ENCODE measurements at regions of chr22 and their contacts with region 1.

Region 1: GRCh38 chr22:46737976-46738646 is at the start of gene CERK:
- DNase-seq: peak; percentile 60 to 79 (median 64)
- H3K4me3 ChIP-seq: peak within 1 kb of the TSS; percentile 55 to 64
- H3K4me3 Mint-ChIP-seq: peak within 1 kb of the TSS; percentile 97 to 100 (median 100)
- H3K27ac ChIP-seq: peak within 1 kb of the TSS; percentile 67
- H3K27ac Mint-ChIP-seq: peak within 1 kb of the TSS; percentile 98 to 100 (median 100)
- H3K4me1 ChIP-seq: peaks cover 47% of the 10 kb centered on the region
- H3K4me1 Mint-ChIP-seq: peaks cover 24 to 56% (median 37%) of the 10 kb centered on the region in 4 donors
- H3K27me3 ChIP-seq: no peaks in the 10 kb centered on the region
- H3K27me3 Mint-ChIP-seq: no peaks in the 10 kb centered on the region
- total RNA-seq, gene CERK: 161 to 164 TPM

Region 2: GRCh38 chr22:46613606-46614021 is 124.5 kb before region 1 on chr22:
- CTCF ChIA-PET with region 1: no interaction called
- POLR2A ChIA-PET with region 1: interaction called, 5 read pairs
- intact Hi-C with region 1: loop called (anchors 2 kb)
- DNase-seq: no peak
- H3K4me3 ChIP-seq: peak overlapping the region; percentile 30 to 58
- H3K4me3 Mint-ChIP-seq: peak overlapping the region; percentile 86 to 94 (median 90)
- H3K27ac ChIP-seq: peak overlapping the region; percentile 44
- H3K27ac Mint-ChIP-seq: peak overlapping the region; percentile 88 to 94 (median 93)
- H3K4me1 ChIP-seq: peaks cover 32% of the 10 kb centered on the region
- H3K4me1 Mint-ChIP-seq: peaks cover 18 to 30% (median 25%) of the 10 kb centered on the region in 4 donors
- H3K27me3 ChIP-seq: no peaks in the 10 kb centered on the region
- H3K27me3 Mint-ChIP-seq: no peaks in the 10 kb centered on the region

Region 3: DNA sequence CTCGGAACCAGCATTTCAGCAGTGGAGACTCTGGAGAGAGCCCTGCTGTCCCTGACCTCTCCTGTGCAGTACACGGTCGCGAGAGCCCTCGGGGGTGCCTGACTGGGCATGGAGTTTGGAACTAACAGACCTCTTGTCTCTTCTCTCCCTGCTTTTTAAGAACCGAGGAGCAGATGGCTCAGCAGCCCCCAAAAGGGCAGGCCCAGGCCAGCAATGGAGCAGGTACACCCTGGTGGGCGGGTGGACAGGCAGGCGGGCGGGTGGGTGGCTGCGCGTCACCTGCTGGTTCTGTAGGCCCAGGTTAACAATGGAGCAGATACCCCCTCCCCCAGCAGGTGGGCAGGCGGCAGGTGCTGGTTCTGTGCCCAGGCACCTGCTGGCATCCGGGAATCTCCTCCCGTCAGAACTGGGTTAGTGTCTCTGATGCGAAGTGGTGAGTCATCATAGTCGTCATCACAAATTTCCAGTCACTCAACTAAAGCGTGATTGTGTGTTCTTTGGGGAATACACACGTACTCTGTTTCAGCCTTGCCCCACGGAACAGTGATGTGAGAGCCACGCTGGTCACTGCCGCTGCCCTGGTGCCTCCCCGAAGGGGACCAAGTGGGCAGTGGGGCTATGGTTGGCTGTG is 76.8 kb before region 1 on chr22:
- CTCF ChIA-PET with region 1: no interaction called
- POLR2A ChIA-PET with region 1: no interaction called
- intact Hi-C with region 1: no loop called
- DNase-seq: peak; percentile 43 to 88 (median 58)
- H3K4me3 ChIP-seq: peak overlapping the region in 1 of 2 donors; percentile 35
- H3K4me3 Mint-ChIP-seq: peak overlapping the region; percentile 0 to 81 (median 64)
- H3K27ac ChIP-seq: peak overlapping the region; percentile 8
- H3K27ac Mint-ChIP-seq: peak overlapping the region; percentile 71 to 91 (median 79)
- H3K4me1 ChIP-seq: peaks cover 28% of the 10 kb centered on the region
- H3K4me1 Mint-ChIP-seq: peaks cover 20 to 31% (median 22%) of the 10 kb centered on the region in 4 donors
- H3K27me3 ChIP-seq: no peaks in the 10 kb centered on the region
- H3K27me3 Mint-ChIP-seq: no peaks in the 10 kb centered on the region

Region 4: DNA sequence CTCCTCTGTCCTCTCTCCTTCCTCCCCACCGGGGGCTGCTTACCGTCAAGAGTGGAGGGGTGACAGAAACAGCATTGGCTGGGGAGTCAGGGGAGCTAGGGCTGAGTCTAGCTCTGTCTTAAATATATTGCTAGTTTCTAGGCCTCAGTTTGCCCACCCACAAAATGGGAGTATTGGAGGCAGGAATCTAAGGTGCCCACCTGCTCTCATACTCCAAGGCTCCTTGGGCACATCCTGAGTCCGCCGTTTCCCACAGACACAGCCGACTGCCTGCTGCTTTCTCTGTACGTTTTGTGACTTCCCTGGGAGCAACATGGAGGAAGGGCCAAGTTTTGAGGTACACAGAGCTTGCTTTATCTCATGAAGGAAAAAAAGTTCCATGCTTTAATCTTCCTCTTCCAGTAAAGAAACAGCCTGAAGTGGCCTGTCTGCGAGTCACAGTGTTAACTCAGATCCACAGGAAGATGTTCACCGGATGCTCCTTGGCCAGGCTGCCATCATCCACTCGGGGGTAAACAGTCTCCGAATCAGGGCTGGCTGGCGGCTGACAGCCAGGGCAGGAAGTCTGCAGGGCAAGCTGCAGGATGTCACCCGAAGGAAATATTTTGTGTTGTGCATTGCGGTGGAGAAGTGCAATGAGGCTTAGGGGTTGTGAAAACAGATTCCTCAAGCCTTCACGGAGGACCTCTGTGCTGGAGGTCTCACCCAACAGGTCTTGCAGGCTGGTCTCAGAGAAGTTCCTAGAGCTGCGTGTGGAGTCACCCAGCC is 11.0 kb after region 1 on chr22:
- CTCF ChIA-PET with region 1: interaction called, 13 read pairs
- POLR2A ChIA-PET with region 1: interaction called, 58 read pairs
- intact Hi-C with region 1: loop called (anchors 1 kb)
- DNase-seq: peak; percentile 68 to 82 (median 71)
- H3K4me3 ChIP-seq: peak overlapping the region; percentile 23 to 39
- H3K4me3 Mint-ChIP-seq: peak overlapping the region; percentile 75 to 89 (median 82)
- H3K27ac ChIP-seq: peak overlapping the region; percentile 56
- H3K27ac Mint-ChIP-seq: peak overlapping the region; percentile 96 to 99 (median 96)
- H3K4me1 ChIP-seq: peaks cover 37% of the 10 kb centered on the region
- H3K4me1 Mint-ChIP-seq: peaks cover 17 to 26% (median 23%) of the 10 kb centered on the region in 4 donors
- H3K27me3 ChIP-seq: no peaks in the 10 kb centered on the region
- H3K27me3 Mint-ChIP-seq: no peaks in the 10 kb centered on the region

Region 5: DNA sequence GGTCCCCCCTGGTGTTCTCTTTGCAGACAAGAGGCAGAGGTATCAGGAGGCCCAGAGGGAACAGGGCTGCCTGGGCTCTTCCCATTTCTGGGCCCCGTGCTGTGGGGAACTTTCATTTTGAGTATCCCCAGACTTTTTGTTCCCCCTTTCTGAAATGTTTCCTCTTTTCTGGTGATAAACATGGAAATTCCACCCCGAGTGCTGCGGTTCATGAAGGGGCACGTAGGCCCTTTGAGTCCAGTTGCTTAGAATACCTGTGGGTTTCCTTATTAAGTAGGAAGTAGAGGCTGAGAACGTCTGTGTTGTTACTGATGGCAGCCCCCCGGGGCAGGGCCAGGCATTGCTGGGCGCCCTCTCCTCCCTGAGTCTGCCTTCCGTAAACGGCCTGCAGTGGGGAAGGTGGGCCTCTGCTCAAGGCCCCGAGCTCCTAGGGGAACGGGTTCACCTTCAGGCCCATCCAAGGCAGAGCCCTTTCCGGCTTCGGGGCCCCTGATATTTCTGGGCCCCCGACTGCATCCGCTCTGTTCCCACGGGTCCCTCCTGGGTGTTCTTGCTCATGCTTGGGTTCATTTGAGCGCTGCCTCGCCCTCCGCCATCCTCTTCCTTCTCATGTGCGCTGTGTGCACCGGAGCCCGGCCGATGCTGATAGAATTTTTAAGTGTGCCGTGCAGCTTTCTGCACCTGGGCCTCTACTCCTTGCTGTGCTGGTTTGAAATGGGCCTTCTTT is 36.3 kb after region 1 on chr22:
- CTCF ChIA-PET with region 1: interaction called, 4 read pairs
- POLR2A ChIA-PET with region 1: interaction called, 11 read pairs
- intact Hi-C with region 1: no loop called
- DNase-seq: peak in 3 of 5 donors; percentile 34 to 50 (median 34)
- H3K4me3 ChIP-seq: peak overlapping the region in 1 of 2 donors; percentile 32
- H3K4me3 Mint-ChIP-seq: peak overlapping the region; percentile 62 to 87 (median 76)
- H3K27ac ChIP-seq: peak overlapping the region; percentile 73
- H3K27ac Mint-ChIP-seq: peak overlapping the region; percentile 91 to 98 (median 93)
- H3K4me1 ChIP-seq: peaks cover 80% of the 10 kb centered on the region
- H3K4me1 Mint-ChIP-seq: peaks cover 57 to 83% (median 74%) of the 10 kb centered on the region in 4 donors
- H3K27me3 ChIP-seq: no peaks in the 10 kb centered on the region
- H3K27me3 Mint-ChIP-seq: no peaks in the 10 kb centered on the region

Region 6: GRCh38 chr22:46798366-46799350 is 60.5 kb after region 1 on chr22:
- CTCF ChIA-PET with region 1: interaction called, 53 read pairs
- POLR2A ChIA-PET with region 1: interaction called, 14 read pairs
- intact Hi-C with region 1: loop called (anchors 1 kb)
- DNase-seq: peak; percentile 59 to 72 (median 64)
- H3K4me3 ChIP-seq: no peak overlapping the region
- H3K4me3 Mint-ChIP-seq: no peak overlapping the region
- H3K27ac ChIP-seq: no peak overlapping the region
- H3K27ac Mint-ChIP-seq: peak overlapping the region; percentile 82 to 96 (median 91)
- H3K4me1 ChIP-seq: peaks cover 11% of the 10 kb centered on the region
- H3K4me1 Mint-ChIP-seq: peaks cover 12 to 33% (median 25%) of the 10 kb centered on the region in 4 donors
- H3K27me3 ChIP-seq: no peaks in the 10 kb centered on the region
- H3K27me3 Mint-ChIP-seq: no peaks in the 10 kb centered on the region

Region 7: DNA sequence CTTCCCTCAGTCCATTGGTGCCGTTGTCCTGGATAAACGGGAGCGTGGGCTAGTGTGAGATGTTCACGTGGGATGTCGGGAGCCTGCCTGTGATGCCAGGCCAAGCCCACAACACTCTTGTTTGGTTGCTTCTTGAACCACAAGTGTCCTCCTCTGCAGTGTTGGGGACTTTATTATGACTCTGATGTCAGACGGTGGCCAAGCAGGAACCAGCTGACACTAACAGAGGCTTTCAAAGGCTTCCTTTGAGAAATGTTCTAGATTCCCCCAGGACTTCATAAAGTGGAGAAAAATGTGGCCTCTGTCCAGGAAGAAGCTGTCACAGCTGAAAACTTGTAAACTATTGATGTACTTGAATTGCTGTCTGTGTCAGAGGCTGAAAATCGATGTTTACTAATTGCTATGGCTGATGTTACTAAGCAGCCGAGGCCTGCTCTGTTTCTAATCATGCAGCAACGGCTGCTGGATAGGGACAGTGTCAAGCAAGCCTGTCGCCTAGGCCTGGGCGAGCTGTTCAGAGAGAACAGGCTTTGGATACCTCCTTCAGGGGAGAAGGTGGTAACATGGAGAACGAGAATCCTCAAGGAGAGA is 156.1 kb after region 1 on chr22:
- CTCF ChIA-PET with region 1: no interaction called
- POLR2A ChIA-PET with region 1: no interaction called
- intact Hi-C with region 1: no loop called
- DNase-seq: no peak
- H3K4me3 ChIP-seq: no peak overlapping the region
- H3K4me3 Mint-ChIP-seq: no peak overlapping the region
- H3K27ac ChIP-seq: no peak overlapping the region
- H3K27ac Mint-ChIP-seq: peak overlapping the region in 1 of 7 donors; percentile 83
- H3K4me1 ChIP-seq: no peaks in the 10 kb centered on the region
- H3K4me1 Mint-ChIP-seq: peaks cover 11 to 16% (median 15%) of the 10 kb centered on the region in 4 donors
- H3K27me3 ChIP-seq: no peaks in the 10 kb centered on the region
- H3K27me3 Mint-ChIP-seq: no peaks in the 10 kb centered on the region

Region 8: GRCh38 chr22:46984751-46985506 is 246.8 kb after region 1 on chr22:
- CTCF ChIA-PET with region 1: no interaction called
- POLR2A ChIA-PET with region 1: no interaction called
- intact Hi-C with region 1: no loop called
- DNase-seq: no peak
- H3K4me3 ChIP-seq: no peak overlapping the region
- H3K4me3 Mint-ChIP-seq: no peak overlapping the region
- H3K27ac ChIP-seq: no peak overlapping the region
- H3K27ac Mint-ChIP-seq: peak overlapping the region in 1 of 7 donors; percentile 15
- H3K4me1 ChIP-seq: no peaks in the 10 kb centered on the region
- H3K4me1 Mint-ChIP-seq: peaks cover 3 to 19% (median 12%) of the 10 kb centered on the region in 4 donors
- H3K27me3 ChIP-seq: no peaks in the 10 kb centered on the region
- H3K27me3 Mint-ChIP-seq: no peaks in the 10 kb centered on the region